A673 (cell line): ENCODE measurements at regions of chr2 and their contacts with region 1.

Region 1: DNA sequence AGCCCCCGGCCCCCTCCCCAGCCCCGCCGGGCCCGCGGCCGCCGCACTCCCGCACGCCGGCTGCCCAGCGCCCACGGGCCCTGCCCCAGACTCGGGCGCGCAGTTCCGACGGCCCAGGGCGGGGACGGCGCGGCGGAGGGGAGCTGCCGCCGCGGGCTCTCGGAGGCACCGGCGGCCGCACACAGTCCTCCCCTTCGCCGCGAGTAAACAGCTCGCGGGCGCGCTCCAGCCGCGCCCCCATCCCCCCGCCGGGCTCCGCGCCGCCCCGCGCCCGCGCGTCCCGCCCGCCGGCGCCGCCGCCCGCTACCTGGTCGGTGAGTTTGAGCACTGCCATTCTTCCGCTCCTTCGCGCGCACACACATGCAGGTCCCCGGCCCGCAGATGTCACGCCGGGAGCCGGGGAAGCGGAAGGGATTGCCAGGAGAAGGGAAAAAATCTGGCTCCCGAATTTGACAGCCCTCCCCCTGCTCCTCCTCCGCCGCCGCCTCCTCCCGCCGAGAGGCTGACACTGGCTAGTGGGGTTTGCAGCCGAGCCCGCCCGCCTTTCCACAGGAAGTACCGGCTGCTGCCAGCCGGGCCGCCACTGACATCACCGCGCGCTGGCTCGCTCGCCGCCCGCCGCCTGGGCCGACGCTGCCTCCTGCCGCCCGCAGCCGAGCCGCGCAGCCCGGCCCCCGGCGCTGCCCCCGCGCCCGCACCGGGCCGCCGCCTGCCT is at the start of gene ANKRD44:
- DNase-seq: peak; percentile 92
- H3K4me3 ChIP-seq: peak within 1 kb of the TSS; percentile 61
- H3K27ac ChIP-seq: no peak within 1 kb of the TSS
- H3K4me1 ChIP-seq: peaks cover 16% of the 10 kb centered on the region
- H3K27me3 ChIP-seq: no peaks in the 10 kb centered on the region
- CTCF ChIP-seq: 0 out of 2 replicates have a peak, but pooled peaks have one; percentile 26
- total RNA-seq, gene ANKRD44: 17.0 and 22.2 TPM in 2 replicates

Region 2: DNA sequence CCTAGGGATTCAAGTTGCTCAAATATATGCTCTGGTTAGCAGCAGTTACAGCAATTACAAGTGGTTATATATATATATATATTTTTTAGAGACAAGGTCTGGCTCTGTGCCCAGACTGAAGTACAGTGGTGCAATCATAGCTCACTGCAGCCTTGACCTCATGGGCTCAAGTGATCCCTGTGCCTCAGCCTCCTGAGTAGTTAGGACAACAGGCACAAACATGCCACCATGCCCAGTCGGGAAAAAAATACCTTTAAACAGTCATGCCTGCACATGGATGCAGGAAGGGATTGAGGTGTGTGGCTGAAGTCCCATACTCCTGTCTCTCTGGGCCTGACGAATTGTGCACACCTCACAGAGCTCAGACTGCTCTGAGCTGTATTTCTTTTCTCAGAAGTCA is 1222.2 kb before region 1 on chr2:
- CTCF ChIA-PET with region 1: no interaction called
- POLR2A ChIA-PET with region 1: no interaction called
- intact Hi-C with region 1: no loop called
- DNase-seq: no peak
- H3K4me3 ChIP-seq: no peak overlapping the region
- H3K27ac ChIP-seq: no peak overlapping the region
- H3K4me1 ChIP-seq: no peaks in the 10 kb centered on the region
- H3K27me3 ChIP-seq: no peaks in the 10 kb centered on the region
- CTCF ChIP-seq: no peak

Region 3: DNA sequence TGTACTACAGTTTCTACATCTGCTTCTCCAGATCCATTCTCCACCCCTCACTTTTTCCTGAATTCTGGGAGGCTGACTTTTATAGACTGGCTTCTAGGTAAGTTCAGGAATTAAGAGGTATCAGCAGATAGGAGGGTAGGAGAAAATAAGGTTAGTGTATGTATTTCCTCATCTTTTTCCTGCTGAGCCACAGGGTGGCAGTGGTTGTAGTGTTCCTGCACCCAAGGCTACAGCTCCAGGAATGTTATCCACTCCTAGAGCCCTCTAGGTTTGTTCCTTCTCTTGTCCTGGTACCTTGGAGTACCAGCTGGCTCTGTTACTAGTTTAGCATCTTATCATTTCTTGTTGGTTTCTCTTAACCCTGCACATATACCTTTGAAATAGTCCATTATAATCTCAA is 460.5 kb before region 1 on chr2:
- CTCF ChIA-PET with region 1: no interaction called
- POLR2A ChIA-PET with region 1: interaction called, 10 read pairs
- intact Hi-C with region 1: no loop called
- DNase-seq: peak; percentile 54
- H3K4me3 ChIP-seq: no peak overlapping the region
- H3K27ac ChIP-seq: no peak overlapping the region
- H3K4me1 ChIP-seq: peaks cover 19% of the 10 kb centered on the region
- H3K27me3 ChIP-seq: no peaks in the 10 kb centered on the region
- CTCF ChIP-seq: peak; percentile 60

Region 4: GRCh38 chr2:197079832-197080555 is 230.4 kb before region 1 on chr2:
- CTCF ChIA-PET with region 1: no interaction called
- POLR2A ChIA-PET with region 1: no interaction called
- intact Hi-C with region 1: no loop called
- DNase-seq: peak; percentile 93
- H3K4me3 ChIP-seq: no peak overlapping the region
- H3K27ac ChIP-seq: peak overlapping the region; percentile 86
- H3K4me1 ChIP-seq: peaks cover 46% of the 10 kb centered on the region
- H3K27me3 ChIP-seq: no peaks in the 10 kb centered on the region
- CTCF ChIP-seq: no peak

Region 5: DNA sequence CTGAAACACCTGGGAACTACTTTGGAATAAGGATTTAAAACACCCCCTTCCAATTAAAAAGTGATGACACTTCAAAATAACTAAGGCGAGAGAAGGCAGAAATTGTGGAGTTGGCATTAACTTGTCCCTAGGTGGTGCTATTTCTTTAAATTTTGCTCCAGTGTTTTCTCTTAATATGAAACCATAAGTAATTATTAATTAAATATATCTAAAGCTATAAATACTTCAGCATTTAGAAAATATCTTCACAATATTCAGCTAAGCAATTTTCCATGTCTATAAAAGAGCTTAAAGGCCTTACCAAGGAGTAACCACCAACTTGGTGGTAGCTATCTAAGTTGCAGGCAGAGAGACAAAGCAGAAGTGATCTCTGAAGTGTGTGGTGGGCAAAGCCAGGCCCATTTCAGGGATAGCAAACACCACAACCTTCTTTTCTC is 197.1 kb before region 1 on chr2:
- CTCF ChIA-PET with region 1: interaction called, 3 read pairs
- POLR2A ChIA-PET with region 1: no interaction called
- intact Hi-C with region 1: loop called (anchors 5 kb)
- DNase-seq: peak; percentile 60
- H3K4me3 ChIP-seq: no peak overlapping the region
- H3K27ac ChIP-seq: peak overlapping the region; percentile 18
- H3K4me1 ChIP-seq: peaks cover 7% of the 10 kb centered on the region
- H3K27me3 ChIP-seq: no peaks in the 10 kb centered on the region
- CTCF ChIP-seq: peak; percentile 77

Region 6: DNA sequence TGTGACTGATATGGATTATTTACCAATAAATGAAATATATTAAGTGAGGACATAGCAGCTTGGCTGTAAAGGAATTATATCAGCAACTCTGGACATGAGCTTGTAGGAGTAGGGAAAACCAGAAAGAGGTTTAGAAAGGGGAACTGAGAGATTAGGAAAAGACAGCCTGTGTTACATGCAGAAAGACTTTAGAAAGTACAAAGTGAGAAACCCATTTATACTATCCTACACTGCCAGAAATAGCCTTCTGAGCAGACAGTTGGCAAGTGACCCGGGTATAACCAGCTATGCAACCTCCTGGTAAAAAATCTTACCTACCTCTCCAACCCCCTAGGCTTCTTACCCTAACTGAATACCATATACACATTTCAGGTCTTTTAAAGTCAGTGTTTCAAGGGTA is 133.9 kb before region 1 on chr2:
- CTCF ChIA-PET with region 1: no interaction called
- POLR2A ChIA-PET with region 1: no interaction called
- intact Hi-C with region 1: no loop called
- DNase-seq: no peak
- H3K4me3 ChIP-seq: no peak overlapping the region
- H3K27ac ChIP-seq: no peak overlapping the region
- H3K4me1 ChIP-seq: no peaks in the 10 kb centered on the region
- H3K27me3 ChIP-seq: no peaks in the 10 kb centered on the region
- CTCF ChIP-seq: no peak

Region 7: GRCh38 chr2:197191177-197191939 is 119.1 kb before region 1 on chr2:
- CTCF ChIA-PET with region 1: no interaction called
- POLR2A ChIA-PET with region 1: no interaction called
- intact Hi-C with region 1: loop called (anchors 2 kb)
- DNase-seq: peak; percentile 50
- H3K4me3 ChIP-seq: no peak overlapping the region
- H3K27ac ChIP-seq: no peak overlapping the region
- H3K4me1 ChIP-seq: peaks cover 9% of the 10 kb centered on the region
- H3K27me3 ChIP-seq: no peaks in the 10 kb centered on the region
- CTCF ChIP-seq: peak; percentile 82

Region 8: DNA sequence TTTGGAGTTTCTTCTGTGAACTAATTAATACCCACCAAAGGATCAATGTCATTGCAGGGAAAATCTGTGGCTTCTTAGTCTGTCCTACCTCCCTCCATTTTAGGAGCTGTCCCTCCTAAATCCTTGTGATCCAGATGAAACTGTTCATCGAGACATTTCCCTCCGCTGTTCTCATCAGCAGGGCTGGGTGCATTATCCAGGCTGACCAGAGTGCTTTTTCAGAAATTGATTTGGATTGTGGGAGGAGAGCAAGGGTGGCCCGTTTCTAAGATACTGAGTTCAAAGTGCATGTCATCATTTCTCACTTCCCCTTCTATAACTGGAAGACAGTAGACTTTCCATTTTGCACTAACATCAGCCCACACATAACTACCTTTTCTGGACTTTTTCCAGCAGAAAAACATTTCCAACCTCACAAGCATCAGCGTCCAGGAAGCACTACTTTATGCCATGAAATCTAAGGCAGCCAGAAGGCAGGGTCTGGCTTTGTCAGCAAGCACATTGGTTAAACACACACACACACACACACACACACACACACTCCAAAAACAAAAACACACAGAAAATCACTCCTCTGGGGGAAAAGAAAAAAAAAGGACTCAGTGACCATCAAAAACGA is 94.0 kb before region 1 on chr2:
- CTCF ChIA-PET with region 1: no interaction called
- POLR2A ChIA-PET with region 1: no interaction called
- intact Hi-C with region 1: no loop called
- DNase-seq: no peak
- H3K4me3 ChIP-seq: no peak overlapping the region
- H3K27ac ChIP-seq: peak overlapping the region; percentile 70
- H3K4me1 ChIP-seq: peaks cover 39% of the 10 kb centered on the region
- H3K27me3 ChIP-seq: no peaks in the 10 kb centered on the region
- CTCF ChIP-seq: no peak